Sigmoid colon (tissue), 7 donors: ENCODE measurements at regions of chr1 and their contacts with region 1.

Region 1: DNA sequence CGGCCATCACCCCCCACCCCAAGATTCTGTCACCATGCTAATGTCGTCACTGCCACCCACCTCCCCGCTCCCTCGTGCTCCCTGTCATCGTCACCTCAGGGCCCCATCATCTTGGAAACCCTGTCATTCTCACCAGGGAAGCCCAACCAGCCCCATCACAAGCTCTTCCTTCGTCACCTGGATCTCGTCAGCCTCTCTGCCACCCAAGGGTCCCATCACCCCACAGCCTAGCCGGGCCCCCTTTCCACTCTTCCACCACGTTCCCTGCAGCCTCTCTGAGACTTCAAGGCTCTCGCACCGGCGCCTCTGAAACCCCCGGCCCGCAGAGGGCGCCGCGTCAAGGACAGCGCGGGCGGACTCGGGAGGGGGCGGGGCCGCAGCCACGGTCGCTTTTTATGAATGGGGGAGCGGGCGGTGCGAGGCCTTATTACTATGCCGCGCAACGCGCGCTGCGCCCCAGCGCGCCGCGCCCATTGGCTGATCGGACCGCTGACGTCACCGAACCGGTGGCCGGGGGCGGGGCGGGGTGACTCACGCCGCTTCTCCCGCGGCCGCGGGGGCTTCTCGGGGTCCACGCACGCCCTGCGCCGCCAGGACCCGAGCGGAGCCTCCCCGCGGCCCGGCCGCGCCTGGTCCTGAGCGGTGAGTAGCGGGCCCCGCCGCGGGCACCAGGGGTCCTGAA is at the start of gene GPR3:
- DNase-seq: peak; percentile 96
- H3K4me3 ChIP-seq: peak within 1 kb of the TSS; percentile 18 to 53 (median 46)
- H3K27ac ChIP-seq: peak within 1 kb of the TSS; percentile 38 to 78 (median 58)
- H3K4me1 ChIP-seq: peaks cover 0 to 28% (median 20%) of the 10 kb centered on the region in 4 donors
- H3K27me3 ChIP-seq: no peaks in the 10 kb centered on the region
- CTCF ChIP-seq: peak; percentile 30 to 53 (median 44)
- EP300 ChIP-seq: no peak
- POLR2A ChIP-seq: no peak
- total RNA-seq, gene GPR3: 0.36 to 2.0 TPM in 2 of 4 donors, not detected in the others

Region 2: GRCh38 chr1:26993237-26994019 is 398.8 kb before region 1 on chr1 and contains the start of gene TRNP1:
- intact Hi-C with region 1: loop called (anchors 10 kb)
- DNase-seq: peak; percentile 85
- H3K4me3 ChIP-seq: peak within 1 kb of the TSS; percentile 64 to 82 (median 74)
- H3K27ac ChIP-seq: peak within 1 kb of the TSS; percentile 91 to 98 (median 97)
- H3K4me1 ChIP-seq: peaks cover 0 to 51% (median 45%) of the 10 kb centered on the region in 4 donors
- H3K27me3 ChIP-seq: peaks cover 0 to 19% (median 5%) of the 10 kb centered on the region in 3 donors
- CTCF ChIP-seq: no peak
- EP300 ChIP-seq: no peak
- POLR2A ChIP-seq: peak; percentile 63 to 71
- total RNA-seq, gene TRNP1: 15.5 to 29.6 (median 20.2) TPM

Region 3: GRCh38 chr1:27102707-27103491 is 289.3 kb before region 1 on chr1:
- intact Hi-C with region 1: loop called (anchors 5 kb)
- DNase-seq: peak; percentile 90
- H3K4me3 ChIP-seq: no peak overlapping the region
- H3K27ac ChIP-seq: no peak overlapping the region
- H3K4me1 ChIP-seq: peaks cover 0 to 25% (median 22%) of the 10 kb centered on the region in 4 donors
- H3K27me3 ChIP-seq: no peaks in the 10 kb centered on the region
- CTCF ChIP-seq: peak; percentile 94 to 99 (median 96)
- EP300 ChIP-seq: no peak
- POLR2A ChIP-seq: no peak

Region 4: GRCh38 chr1:27300341-27301051 is 91.7 kb before region 1 on chr1:
- intact Hi-C with region 1: loop called (anchors 1 kb)
- DNase-seq: peak; percentile 95
- H3K4me3 ChIP-seq: no peak overlapping the region
- H3K27ac ChIP-seq: peak overlapping the region; percentile 84 to 96 (median 92)
- H3K4me1 ChIP-seq: peaks cover 2 to 47% (median 46%) of the 10 kb centered on the region in 4 donors
- H3K27me3 ChIP-seq: no peaks in the 10 kb centered on the region
- CTCF ChIP-seq: peak; percentile 99
- EP300 ChIP-seq: no peak
- POLR2A ChIP-seq: no peak

Region 5: DNA sequence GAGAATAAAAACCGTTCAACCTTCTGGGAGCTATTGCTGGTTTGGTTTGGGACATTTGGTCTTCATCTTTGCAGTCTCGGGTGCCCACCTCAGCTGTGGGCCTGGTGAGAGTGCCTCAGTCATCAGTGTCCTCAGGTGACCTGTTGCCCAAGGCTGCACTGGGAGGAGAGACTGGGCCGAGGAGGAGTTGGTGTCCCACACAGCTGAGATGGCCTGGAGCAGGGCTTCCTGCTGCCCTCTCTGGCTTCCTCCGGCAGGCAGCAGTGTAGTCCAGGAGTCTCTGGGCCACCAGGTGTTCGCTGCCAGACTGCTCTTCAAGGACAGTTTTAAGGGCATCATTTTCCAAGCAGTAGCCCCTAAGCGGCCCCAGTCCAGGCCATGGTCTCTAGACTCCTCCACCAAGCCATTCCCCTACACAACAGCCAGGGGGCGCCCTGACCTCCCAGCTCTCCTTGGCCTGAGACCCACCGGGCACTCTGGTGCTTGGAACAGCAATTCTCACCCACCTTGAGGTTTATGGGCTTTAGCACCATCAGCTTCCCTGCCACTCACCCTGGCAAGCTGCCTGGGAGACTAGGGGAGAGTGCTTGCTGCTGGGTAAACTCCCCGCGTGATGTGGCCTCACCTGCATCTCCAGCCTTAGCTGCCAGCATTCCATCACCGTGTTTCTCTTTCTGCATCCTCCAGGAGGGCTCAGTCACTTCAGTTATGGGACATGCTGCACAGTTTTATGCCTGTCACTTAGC is 59.5 kb before region 1 on chr1:
- intact Hi-C with region 1: loop called (anchors 10 kb)
- DNase-seq: peak; percentile 68
- H3K4me3 ChIP-seq: no peak overlapping the region
- H3K27ac ChIP-seq: no peak overlapping the region
- H3K4me1 ChIP-seq: peaks cover 0 to 11% (median 4%) of the 10 kb centered on the region in 4 donors
- H3K27me3 ChIP-seq: no peaks in the 10 kb centered on the region
- CTCF ChIP-seq: peak in 3 of 4 experiments; percentile 63 to 71 (median 67)
- EP300 ChIP-seq: no peak
- POLR2A ChIP-seq: no peak

Region 6: DNA sequence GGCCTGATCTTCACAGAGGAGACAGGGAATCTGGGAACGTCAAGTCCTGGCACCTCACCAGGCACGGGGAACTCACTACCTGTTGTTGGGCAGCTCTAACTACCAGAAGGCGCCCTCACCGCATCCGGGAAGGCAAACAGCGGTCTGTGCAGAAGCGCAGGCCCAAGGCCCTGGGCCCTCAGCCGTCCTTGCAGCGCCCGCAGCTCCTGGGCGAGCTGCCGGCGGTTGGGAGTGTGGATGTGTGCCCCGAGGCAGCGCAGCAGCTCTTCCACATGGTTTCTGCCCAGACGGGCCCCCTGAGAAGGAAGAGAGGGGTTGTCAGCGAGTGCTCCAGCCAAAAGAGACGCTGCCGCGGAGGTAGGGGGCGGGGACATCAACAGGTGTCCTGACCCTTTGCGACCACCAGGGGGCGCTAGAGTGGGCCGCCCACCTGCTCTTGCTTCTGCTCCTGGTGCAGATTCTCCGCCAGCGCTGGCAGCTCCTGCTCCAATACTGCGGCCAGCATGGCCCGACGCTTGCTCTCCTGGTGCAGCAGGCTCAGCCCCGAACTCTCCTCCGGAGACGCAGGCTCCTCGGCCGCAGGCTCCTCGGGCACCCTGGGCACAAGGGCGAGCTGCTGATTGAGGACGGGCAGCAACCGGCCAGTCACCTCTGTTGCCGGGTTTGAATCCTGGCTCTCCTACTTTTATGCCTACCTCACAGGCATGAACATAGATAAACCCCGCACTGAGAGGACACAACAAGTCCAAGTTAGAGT is 34.8 kb before region 1 on chr1:
- intact Hi-C with region 1: loop called (anchors 2 kb)
- DNase-seq: peak; percentile 90
- H3K4me3 ChIP-seq: peak overlapping the region in 1 of 4 donors; percentile 29
- H3K27ac ChIP-seq: peak overlapping the region in 1 of 4 donors; percentile 33
- H3K4me1 ChIP-seq: peaks cover 0 to 21% (median 17%) of the 10 kb centered on the region in 4 donors
- H3K27me3 ChIP-seq: no peaks in the 10 kb centered on the region
- CTCF ChIP-seq: peak; percentile 92 to 99 (median 96)
- EP300 ChIP-seq: no peak
- POLR2A ChIP-seq: no peak

Region 7: GRCh38 chr1:27365372-27366112 is 26.7 kb before region 1 on chr1:
- intact Hi-C with region 1: loop called (anchors 2 kb)
- DNase-seq: peak; percentile 97
- H3K4me3 ChIP-seq: peak overlapping the region; percentile 81 to 91 (median 85)
- H3K27ac ChIP-seq: peak overlapping the region; percentile 99 to 100 (median 100)
- H3K4me1 ChIP-seq: peaks cover 0 to 33% (median 29%) of the 10 kb centered on the region in 4 donors
- H3K27me3 ChIP-seq: no peaks in the 10 kb centered on the region
- CTCF ChIP-seq: no peak
- EP300 ChIP-seq: no peak
- POLR2A ChIP-seq: peak; percentile 56 to 59